Aorta (tissue), 5 donors: ENCODE measurements at regions of chr9 and their contacts with region 1.

Region 1: DNA sequence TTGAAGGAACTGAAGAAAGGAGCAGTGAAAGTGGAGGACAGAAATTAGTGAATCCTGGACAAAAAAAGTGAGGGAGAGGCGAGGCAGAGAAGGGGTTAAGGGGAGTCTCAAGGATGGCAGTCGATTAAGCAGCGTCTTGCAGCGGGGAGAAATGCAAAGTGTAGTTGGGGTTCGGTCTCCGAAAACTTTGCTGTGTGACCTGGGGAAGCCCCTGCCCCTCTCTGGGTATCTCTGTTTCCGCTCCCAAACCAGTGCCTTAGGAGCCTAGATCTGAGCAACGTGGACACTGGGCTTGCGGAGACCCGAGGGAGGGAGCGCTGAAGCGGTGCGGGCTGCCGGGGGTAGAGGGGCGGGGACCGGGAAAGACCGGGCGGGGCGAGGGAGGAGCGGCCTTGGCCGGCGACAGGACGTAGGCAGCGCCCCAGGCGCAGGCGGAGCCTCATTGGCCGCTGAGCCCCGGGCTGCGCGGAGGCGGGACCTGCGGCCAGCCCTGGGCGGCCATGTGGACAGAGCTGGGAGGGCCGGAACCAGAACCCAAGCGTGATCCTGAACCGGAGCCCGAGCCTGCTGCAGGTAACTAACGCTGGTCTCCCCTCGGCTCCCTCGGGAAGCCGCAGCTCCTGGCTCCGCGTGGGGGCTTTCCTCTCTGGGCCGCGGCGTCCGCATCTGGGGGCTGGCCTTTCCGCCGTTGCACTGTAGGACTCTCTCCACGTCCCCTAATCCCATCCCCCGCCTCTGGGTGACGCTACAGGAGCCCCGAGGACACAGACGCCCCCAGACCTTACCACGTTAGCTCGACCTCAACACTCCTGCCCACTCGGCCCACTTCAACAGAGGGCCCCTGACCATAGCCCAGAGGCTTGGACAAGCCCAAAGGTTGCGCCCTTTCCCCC is at the start of gene ALDH1B1:
- DNase-seq: peak; percentile 93 to 97
- ATAC-seq: peak; percentile 93
- H3K4me3 ChIP-seq: peak within 1 kb of the TSS; percentile 56 to 67
- H3K27ac ChIP-seq: peak within 1 kb of the TSS; percentile 95 to 97
- H3K4me1 ChIP-seq: no peaks in the 10 kb centered on the region
- H3K27me3 ChIP-seq: no peaks in the 10 kb centered on the region
- total RNA-seq, gene ALDH1B1: 141 to 336 TPM

Region 2: DNA sequence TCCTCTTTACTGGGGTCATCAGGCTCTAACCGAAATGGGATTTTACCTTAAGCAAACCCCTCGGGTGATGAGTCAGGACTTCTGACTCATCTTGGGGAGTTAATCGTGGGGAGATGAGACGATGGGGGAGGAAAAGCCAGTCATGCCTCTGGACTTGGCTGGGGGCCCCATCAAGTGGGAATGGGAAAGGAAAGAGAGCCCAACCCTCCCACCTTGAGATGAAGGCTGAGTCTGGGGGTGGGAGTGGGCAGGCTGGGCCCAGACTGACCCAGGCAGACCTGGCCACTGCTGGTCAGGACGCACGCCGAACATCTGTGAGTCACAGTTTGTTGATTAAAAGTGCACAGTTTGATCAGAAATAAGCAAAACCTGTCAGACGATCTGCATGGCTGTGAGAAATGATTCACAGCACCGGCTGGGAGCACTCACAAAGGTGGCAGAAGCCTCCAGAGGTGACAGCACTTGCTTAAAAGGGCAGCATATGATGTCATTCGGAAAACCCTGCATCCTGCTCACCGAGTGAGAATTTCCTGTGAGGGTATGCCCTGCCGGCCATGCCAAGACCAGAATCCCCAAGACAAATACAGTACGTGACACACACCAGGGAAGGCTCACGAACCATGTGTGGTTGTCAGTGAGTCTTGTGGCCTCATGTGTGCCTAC is 438.6 kb before region 1 on chr9:
- intact Hi-C with region 1: loop called in 1 of 2 experiments (anchors 10 kb)
- DNase-seq: peak; percentile 81 to 82
- ATAC-seq: peak; percentile 45
- H3K4me3 ChIP-seq: no peak overlapping the region
- H3K27ac ChIP-seq: no peak overlapping the region
- H3K4me1 ChIP-seq: no peaks in the 10 kb centered on the region
- H3K27me3 ChIP-seq: no peaks in the 10 kb centered on the region

Region 3: GRCh38 chr9:38662763-38663593 is 270.5 kb after region 1 on chr9:
- intact Hi-C with region 1: no loop called
- DNase-seq: no peak
- ATAC-seq: no peak
- H3K4me3 ChIP-seq: no peak overlapping the region
- H3K27ac ChIP-seq: no peak overlapping the region
- H3K4me1 ChIP-seq: no peaks in the 10 kb centered on the region
- H3K27me3 ChIP-seq: no peaks in the 10 kb centered on the region

Region 4: GRCh38 chr9:38687387-38687842 is 294.9 kb after region 1 on chr9:
- intact Hi-C with region 1: no loop called
- DNase-seq: peak; percentile 56 to 80
- ATAC-seq: peak; percentile 57
- H3K4me3 ChIP-seq: no peak overlapping the region
- H3K27ac ChIP-seq: no peak overlapping the region
- H3K4me1 ChIP-seq: no peaks in the 10 kb centered on the region
- H3K27me3 ChIP-seq: no peaks in the 10 kb centered on the region